Heart left ventricle (tissue), 16 donors: ENCODE measurements at regions of chr15 and their contacts with region 1.

Region 1: GRCh38 chr15:89776274-89777072 is at the start of gene MESP2:
- DNase-seq: peak; percentile 88 to 93 (median 89)
- ATAC-seq: peak; percentile 87 to 96 (median 94)
- H3K4me3 ChIP-seq: peak within 1 kb of the TSS in 11 of 12 donors; percentile 36 to 61 (median 52)
- H3K27ac ChIP-seq: peak within 1 kb of the TSS in 6 of 12 donors; percentile 9 to 61 (median 40)
- H3K4me1 ChIP-seq: peaks cover 0 to 32% (median 10%) of the 10 kb centered on the region in 12 donors
- H3K27me3 ChIP-seq: no peaks in the 10 kb centered on the region
- CTCF ChIP-seq: peak; percentile 14 to 72 (median 50)
- POLR2A ChIP-seq: no peak
- total RNA-seq, gene MESP2: 0.16 to 0.64 (median 0.52) TPM in 3 of 9 donors, not detected in the others

Region 2: DNA sequence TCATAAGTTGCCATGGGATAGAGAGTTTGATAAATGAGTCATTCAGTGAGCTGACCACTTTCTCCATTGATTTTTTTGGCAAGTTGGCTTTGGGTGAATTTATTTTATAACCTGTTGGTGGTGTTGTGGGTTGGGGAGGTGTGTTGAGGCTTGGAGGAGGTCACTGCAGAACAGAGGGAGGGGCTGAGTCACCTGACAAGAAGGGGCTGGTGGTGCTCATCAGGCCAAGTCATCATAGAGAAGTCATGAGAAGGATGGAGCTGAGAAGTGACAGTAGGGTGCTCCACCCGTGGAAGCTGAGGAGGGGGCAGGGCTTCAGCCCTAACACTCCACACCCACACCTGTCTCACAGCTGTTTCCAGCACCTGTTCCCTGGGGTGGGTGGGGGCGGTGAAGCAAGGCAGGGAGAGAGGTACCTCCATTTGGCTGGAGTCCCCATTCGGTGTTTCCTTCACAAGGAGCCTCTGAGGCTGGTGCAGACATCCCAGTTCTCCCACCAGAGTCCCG is 290.6 kb before region 1 on chr15:
- intact Hi-C with region 1: no loop called
- DNase-seq: no peak
- ATAC-seq: no peak
- H3K4me3 ChIP-seq: no peak overlapping the region
- H3K27ac ChIP-seq: no peak overlapping the region
- H3K4me1 ChIP-seq: peaks cover 0 to 4% (median 0%) of the 10 kb centered on the region in 12 donors
- H3K27me3 ChIP-seq: peaks cover 0 to 37% (median 14%) of the 10 kb centered on the region in 9 donors
- CTCF ChIP-seq: no peak
- POLR2A ChIP-seq: no peak

Region 3: GRCh38 chr15:89828241-89829082 is 52.0 kb after region 1 on chr15:
- intact Hi-C with region 1: loop called in 3 of 10 experiments (anchors 5 to 10 kb)
- DNase-seq: peak; percentile 45 to 79 (median 53)
- ATAC-seq: peak; percentile 29 to 82 (median 78)
- H3K4me3 ChIP-seq: peak overlapping the region in 1 of 12 donors; percentile 5
- H3K27ac ChIP-seq: peak overlapping the region in 10 of 12 donors; percentile 0 to 66 (median 33)
- H3K4me1 ChIP-seq: peaks cover 0 to 57% (median 14%) of the 10 kb centered on the region in 12 donors
- H3K27me3 ChIP-seq: no peaks in the 10 kb centered on the region
- CTCF ChIP-seq: peak in 2 of 12 donors; percentile 12 to 13
- POLR2A ChIP-seq: no peak

Region 4: GRCh38 chr15:90819850-90820797 is 1043.7 kb after region 1 on chr15:
- intact Hi-C with region 1: no loop called
- DNase-seq: no peak
- ATAC-seq: peak in 2 of 4 donors; percentile 7 to 27
- H3K4me3 ChIP-seq: no peak overlapping the region
- H3K27ac ChIP-seq: peak overlapping the region in 4 of 12 donors; percentile 15 to 55 (median 37)
- H3K4me1 ChIP-seq: peaks cover 0 to 27% (median 11%) of the 10 kb centered on the region in 12 donors
- H3K27me3 ChIP-seq: no peaks in the 10 kb centered on the region
- CTCF ChIP-seq: no peak
- POLR2A ChIP-seq: no peak